ENCODE measurements at regions of chr12 and their contacts with region 1.

Region 1: DNA sequence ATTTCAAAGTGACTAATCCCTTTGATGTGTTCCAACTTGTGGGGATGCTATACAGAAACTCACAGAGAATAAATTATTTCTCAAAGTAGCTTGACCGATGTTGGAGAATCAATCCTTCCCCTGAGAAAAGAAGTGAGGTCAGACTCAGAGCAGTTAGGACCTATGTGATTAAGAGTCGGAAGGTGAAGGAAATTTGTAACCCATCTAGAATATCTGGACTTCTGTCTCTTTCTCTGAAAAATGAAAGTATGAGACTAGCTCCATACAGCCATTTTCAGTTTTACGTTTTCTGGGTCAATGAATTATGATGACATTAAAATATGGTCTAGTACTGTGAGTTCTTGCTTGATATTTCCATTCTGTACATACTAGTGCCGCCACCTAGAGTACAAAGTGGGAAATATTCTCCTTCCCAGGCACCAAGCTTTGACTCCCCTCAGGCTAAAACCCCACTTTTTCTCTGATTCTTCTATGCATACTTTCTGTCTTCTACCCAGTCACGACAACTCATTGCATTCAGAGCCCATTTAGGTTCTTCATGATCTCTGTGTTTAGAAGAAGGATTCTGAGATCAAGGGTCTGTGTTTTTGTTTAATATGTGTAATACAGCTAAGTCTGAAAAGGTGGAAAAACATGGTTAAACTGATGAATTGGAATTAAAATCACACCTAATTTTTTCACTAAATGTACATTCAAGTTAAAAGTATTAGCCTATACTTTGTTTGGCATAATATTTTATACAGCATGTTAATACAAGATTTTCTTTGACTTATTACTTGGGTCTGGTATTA is 6.9 kb upstream of the NTS start:
- DNase-seq: peak; percentile 55
- CTCF ChIP-seq: peak; percentile 80

Region 2: GRCh38 chr12:85424581-85425348 is 442.4 kb before region 1 on chr12:
- CTCF ChIA-PET with region 1: interaction called, 26 read pairs
- POLR2A ChIA-PET with region 1: interaction called, 8 read pairs
- DNase-seq: peak; percentile 14
- CTCF ChIP-seq: peak; percentile 46

Region 3: GRCh38 chr12:85476756-85477155 is 390.4 kb before region 1 on chr12:
- CTCF ChIA-PET with region 1: interaction called, 30 read pairs
- POLR2A ChIA-PET with region 1: no interaction called
- DNase-seq: no peak
- CTCF ChIP-seq: no peak

Region 4: GRCh38 chr12:85843606-85844285 is 23.4 kb before region 1 on chr12:
- CTCF ChIA-PET with region 1: interaction called, 17 read pairs
- POLR2A ChIA-PET with region 1: no interaction called
- DNase-seq: no peak
- CTCF ChIP-seq: no peak

Region 5: DNA sequence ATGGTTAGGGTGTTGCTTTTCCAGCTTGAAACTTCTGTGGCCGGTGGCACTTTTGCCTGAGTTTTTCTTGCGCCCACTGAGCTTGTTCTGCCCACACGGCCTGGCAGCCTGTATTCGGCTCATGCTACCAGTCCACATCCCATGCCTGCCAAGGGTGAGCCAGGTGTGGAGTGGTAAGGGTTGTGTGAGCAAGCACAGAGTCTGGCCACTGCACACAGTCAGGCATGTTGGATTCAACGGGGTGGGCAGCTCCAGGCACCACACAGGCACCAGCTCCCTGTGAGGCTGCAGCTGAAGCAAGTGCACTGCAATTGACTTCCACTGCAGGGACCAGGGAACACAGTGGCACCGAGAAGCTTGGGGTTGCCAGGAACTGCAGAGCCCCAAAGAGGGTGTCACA is 11.9 kb before region 1 on chr12:
- CTCF ChIA-PET with region 1: interaction called, 46 read pairs
- POLR2A ChIA-PET with region 1: no interaction called
- DNase-seq: no peak
- CTCF ChIP-seq: no peak

Region 6: GRCh38 chr12:85971800-85972199 is 104.6 kb after region 1 on chr12:
- CTCF ChIA-PET with region 1: no interaction called
- POLR2A ChIA-PET with region 1: no interaction called
- DNase-seq: no peak
- CTCF ChIP-seq: no peak